ENCODE measurements at regions of chr12 and their contacts with region 1.

Region 1: GRCh38 chr12:25404955-25405354 is 148.1 kb downstream of the LMNTD1 start:
- DNase-seq: no peak

Region 2: GRCh38 chr12:25156061-25156460 is 248.9 kb before region 1 on chr12:
- CTCF ChIA-PET with region 1: interaction called, 10 read pairs
- POLR2A ChIA-PET with region 1: no interaction called
- DNase-seq: no peak